Activated naive CD4-positive, alpha-beta T cell treated with anti-CD3 and anti-CD28 coated beads for 36 hours (primary cell): ENCODE measurements at regions of chr3 and their contacts with region 1.

Region 1: DNA sequence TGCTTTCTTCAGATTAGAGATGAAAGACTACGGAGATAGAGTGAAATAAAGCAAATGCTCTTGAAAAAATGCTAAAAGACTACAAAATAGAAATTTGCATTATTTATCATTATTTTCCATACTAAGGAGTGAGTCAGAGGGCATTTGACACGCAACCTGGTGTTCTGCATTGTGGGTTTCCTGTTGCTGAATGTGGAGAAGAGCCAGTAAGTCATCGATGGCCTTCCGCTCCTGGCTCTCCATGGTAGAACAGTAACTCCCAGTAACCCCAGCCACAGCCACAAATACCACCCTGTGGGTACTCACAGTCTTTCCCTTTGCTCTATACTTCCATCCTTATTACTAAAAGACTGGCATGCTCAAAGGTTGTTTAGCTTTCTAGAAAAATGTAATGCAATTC is 61.5 kb downstream of the CGGBP1 start:
- DNase-seq: peak; percentile 73
- H3K4me3 Mint-ChIP-seq: peak overlapping the region; percentile 21
- H3K27ac Mint-ChIP-seq: no peak overlapping the region
- H3K4me1 Mint-ChIP-seq: peaks cover 13% of the 10 kb centered on the region
- H3K27me3 Mint-ChIP-seq: no peaks in the 10 kb centered on the region

Region 2: DNA sequence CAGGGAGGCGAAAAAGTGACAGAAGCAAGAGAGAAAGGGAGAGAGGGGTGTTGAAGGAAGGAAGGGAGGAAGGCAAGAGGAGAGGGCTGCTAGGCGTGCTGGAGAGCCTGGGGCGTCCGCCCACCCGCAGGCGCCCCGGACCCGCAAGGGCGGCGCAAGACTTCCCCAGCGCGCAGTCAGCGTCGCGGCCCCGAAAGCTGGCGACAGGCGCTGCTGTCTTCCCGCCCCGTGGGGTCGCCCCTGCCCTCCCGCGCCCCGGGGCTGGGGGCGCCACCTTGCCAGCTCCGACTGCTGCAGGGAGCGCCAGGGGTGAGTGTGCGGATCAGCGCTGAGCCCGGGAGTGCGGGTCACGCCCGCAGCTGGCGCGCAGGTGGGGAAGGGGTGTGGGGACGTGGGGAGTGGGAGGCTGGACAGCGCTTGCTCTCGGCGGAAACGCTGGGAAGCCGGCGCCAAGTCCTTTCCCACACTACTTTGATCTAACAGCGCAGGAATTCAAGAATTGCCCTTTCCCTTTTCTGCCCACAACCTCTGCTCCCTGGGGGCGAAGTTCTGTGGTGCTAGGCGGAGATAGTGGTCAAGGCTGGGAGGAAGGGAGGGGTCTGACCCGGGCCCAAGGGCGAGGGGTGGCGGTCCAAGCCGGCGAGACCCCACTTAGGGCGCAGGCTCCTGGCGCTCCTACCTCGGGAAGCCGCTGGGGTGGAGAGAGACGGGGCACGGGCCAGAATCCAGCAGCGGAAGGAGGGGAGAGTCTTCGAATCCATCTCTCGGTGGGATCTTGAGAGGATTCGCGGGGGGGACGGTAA is 204.6 kb before region 1 on chr3:
- CTCF ChIA-PET with region 1: no interaction called
- intact Hi-C with region 1: loop called (anchors 5 kb)
- DNase-seq: peak; percentile 30
- H3K4me3 Mint-ChIP-seq: peak within 1 kb of the TSS; percentile 64
- H3K27ac Mint-ChIP-seq: no peak within 1 kb of the TSS
- H3K4me1 Mint-ChIP-seq: peaks cover 26% of the 10 kb centered on the region
- H3K27me3 Mint-ChIP-seq: peaks cover 69% of the 10 kb centered on the region

Region 3: DNA sequence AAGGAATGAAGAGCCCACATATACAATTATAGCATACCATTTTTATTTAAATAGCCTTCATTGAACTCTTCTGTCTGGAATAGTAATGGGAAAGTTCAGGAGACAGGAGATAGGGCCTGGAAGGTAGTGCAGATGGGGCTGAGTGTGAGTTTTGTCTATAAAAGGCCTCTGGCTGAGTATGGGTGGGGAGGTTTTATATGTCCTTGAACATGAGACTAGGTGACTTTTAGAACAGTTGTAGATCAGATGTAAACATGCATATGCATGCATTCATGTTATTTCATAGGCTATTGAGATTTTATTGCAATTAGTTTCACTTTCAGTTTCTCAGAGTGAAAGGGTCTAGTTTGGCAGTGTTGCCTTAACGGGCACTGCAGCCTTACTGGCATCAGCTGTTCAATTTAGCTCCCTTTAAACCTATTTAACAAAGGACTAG is 34.4 kb after region 1 on chr3:
- CTCF ChIA-PET with region 1: no interaction called
- intact Hi-C with region 1: loop called (anchors 2 kb)
- DNase-seq: no peak
- H3K4me3 Mint-ChIP-seq: peak overlapping the region; percentile 77
- H3K27ac Mint-ChIP-seq: peak overlapping the region; percentile 72
- H3K4me1 Mint-ChIP-seq: peaks cover 25% of the 10 kb centered on the region
- H3K27me3 Mint-ChIP-seq: no peaks in the 10 kb centered on the region